Activated naive CD4-positive, alpha-beta T cell treated with anti-CD3 and anti-CD28 coated beads for 36 hours (primary cell): ENCODE measurements at regions of chr17 and their contacts with region 1.

Region 1: GRCh38 chr17:64320613-64321553 is 57.8 kb upstream of the TEX2 start:
- DNase-seq: peak; percentile 76
- H3K4me3 Mint-ChIP-seq: no peak overlapping the region
- H3K27ac Mint-ChIP-seq: no peak overlapping the region
- H3K4me1 Mint-ChIP-seq: peaks cover 11% of the 10 kb centered on the region
- H3K27me3 Mint-ChIP-seq: no peaks in the 10 kb centered on the region

Region 2: DNA sequence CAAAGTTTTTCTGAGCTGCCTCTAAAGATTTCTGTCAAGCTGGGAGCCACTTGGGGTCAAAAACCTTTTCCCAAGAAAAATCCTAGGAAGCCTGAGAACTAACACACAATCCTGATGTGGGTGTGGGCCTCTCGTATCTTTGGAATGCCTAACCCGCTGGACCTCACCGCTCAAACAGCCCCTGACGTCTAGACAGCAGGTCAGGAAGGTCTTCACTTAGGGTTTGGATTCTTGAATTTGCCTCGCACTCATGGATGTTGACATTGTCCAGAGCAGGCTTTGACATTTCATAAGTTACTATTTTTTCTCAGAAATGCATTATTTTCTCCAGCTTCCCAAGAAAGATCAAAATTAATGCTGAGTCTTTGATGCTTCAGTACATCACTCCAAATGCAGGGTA is 76.7 kb before region 1 on chr17:
- CTCF ChIA-PET with region 1: no interaction called
- intact Hi-C with region 1: no loop called
- DNase-seq: no peak
- H3K4me3 Mint-ChIP-seq: no peak overlapping the region
- H3K27ac Mint-ChIP-seq: no peak overlapping the region
- H3K4me1 Mint-ChIP-seq: peaks cover 18% of the 10 kb centered on the region
- H3K27me3 Mint-ChIP-seq: no peaks in the 10 kb centered on the region

Region 3: GRCh38 chr17:64270885-64271284 is 50.0 kb before region 1 on chr17:
- CTCF ChIA-PET with region 1: no interaction called
- intact Hi-C with region 1: no loop called
- DNase-seq: peak; percentile 33
- H3K4me3 Mint-ChIP-seq: peak overlapping the region; percentile 5
- H3K27ac Mint-ChIP-seq: peak overlapping the region; percentile 7
- H3K4me1 Mint-ChIP-seq: peaks cover 30% of the 10 kb centered on the region
- H3K27me3 Mint-ChIP-seq: peaks cover 2% of the 10 kb centered on the region

Region 4: GRCh38 chr17:64306850-64307463 is 13.9 kb before region 1 on chr17:
- CTCF ChIA-PET with region 1: interaction called, 18 read pairs
- intact Hi-C with region 1: no loop called
- DNase-seq: peak; percentile 80
- H3K4me3 Mint-ChIP-seq: no peak overlapping the region
- H3K27ac Mint-ChIP-seq: no peak overlapping the region
- H3K4me1 Mint-ChIP-seq: peaks cover 2% of the 10 kb centered on the region
- H3K27me3 Mint-ChIP-seq: no peaks in the 10 kb centered on the region

Region 5: GRCh38 chr17:64411999-64412771 is 91.3 kb after region 1 on chr17:
- CTCF ChIA-PET with region 1: interaction called, 26 read pairs
- intact Hi-C with region 1: no loop called
- DNase-seq: no peak
- H3K4me3 Mint-ChIP-seq: peak overlapping the region; percentile 49
- H3K27ac Mint-ChIP-seq: no peak overlapping the region
- H3K4me1 Mint-ChIP-seq: peaks cover 18% of the 10 kb centered on the region
- H3K27me3 Mint-ChIP-seq: no peaks in the 10 kb centered on the region

Region 6: DNA sequence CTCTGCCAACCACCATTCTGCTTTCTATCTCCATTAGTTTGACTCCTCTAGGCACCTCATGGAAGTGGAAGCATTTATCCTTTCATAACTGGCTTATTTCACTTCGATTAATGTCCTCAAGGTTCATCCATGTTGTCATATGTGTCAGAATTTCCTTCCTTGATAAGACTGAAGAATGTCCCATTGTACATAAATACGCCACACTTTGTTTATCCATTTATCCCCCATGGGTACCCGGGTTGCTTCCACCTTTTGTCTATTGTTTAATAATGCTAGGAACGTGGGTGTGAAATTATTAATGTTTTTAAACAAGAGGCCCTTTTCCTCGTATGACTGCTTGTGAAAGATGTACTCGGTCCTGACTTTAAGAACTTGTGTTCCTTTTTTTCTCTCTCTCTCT is 140.9 kb after region 1 on chr17:
- CTCF ChIA-PET with region 1: no interaction called
- intact Hi-C with region 1: no loop called
- DNase-seq: no peak
- H3K4me3 Mint-ChIP-seq: no peak overlapping the region
- H3K27ac Mint-ChIP-seq: no peak overlapping the region
- H3K4me1 Mint-ChIP-seq: peaks cover 4% of the 10 kb centered on the region
- H3K27me3 Mint-ChIP-seq: no peaks in the 10 kb centered on the region

Region 7: DNA sequence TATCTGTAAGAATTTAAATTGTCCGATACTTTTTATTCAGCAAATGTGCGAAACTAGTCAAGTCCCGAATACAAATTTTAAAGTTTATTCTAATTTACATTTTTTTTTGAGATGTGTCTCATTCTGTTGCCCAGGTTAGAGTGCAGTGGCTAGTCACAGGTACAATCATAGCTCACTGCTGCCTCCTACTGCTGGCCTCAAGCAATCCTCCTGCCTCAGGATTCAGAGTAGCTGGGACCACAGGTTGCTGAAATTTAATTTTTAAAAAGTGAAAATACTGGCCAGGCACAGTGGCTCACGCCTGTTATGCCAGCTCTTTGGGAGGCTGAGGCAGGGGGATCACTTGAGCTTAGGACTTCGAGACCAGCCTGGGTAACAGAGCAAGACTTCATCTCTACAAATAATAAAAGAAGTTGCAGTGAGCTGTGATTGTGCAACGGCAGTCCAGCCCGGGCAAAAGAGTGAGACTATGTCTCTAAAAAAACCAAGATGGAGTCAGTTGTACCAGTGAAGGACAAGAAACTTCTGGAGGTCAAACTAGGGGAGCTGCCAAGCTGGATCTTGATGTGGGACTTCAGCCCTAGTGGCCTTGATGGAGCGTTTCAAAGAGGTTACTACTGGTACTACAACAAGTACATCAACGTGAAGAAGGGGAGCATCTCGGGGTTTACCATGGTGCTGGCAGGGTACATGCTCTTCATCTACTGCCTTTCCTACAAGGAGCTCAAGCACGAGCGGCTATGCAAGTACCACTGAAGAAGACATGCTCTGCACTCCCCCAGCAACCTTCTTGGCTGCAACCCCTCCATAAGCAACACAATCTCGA is 170.4 kb after region 1 on chr17:
- CTCF ChIA-PET with region 1: interaction called, 3 read pairs
- intact Hi-C with region 1: loop called (anchors 2 kb)
- DNase-seq: peak; percentile 75
- H3K4me3 Mint-ChIP-seq: no peak overlapping the region
- H3K27ac Mint-ChIP-seq: no peak overlapping the region
- H3K4me1 Mint-ChIP-seq: peaks cover 31% of the 10 kb centered on the region
- H3K27me3 Mint-ChIP-seq: no peaks in the 10 kb centered on the region

Region 8: DNA sequence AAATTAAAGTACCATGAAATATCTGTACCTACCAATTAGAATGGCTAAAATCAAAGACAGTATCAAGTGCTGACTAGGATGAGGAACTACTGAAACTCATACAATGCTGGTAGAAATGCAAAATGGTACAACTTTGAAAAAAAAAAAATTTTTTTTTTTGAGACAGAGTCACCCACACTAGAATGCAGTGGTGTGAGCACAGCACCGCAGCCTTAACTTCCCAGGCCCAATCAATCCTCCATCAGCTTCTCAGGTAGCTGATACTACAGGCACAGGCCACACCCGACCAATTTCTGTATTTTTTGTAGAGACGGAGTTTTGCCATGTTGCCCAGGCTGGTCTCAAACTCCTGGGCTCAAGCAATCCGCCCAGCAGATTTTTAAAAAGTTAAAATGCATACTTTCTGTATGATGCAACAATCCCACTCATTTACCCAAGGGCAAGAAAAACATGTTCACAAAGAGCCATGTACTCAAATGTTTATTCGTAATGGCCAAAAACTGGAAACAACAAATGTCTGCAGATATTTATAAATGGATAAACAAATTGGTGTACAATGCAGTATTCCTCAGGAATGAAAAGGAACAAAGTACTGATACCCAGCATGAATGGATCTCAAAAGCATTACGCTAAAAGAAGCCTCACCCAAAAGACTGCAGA is 332.6 kb after region 1 on chr17:
- CTCF ChIA-PET with region 1: no interaction called
- intact Hi-C with region 1: loop called (anchors 1 kb)
- DNase-seq: no peak
- H3K4me3 Mint-ChIP-seq: no peak overlapping the region
- H3K27ac Mint-ChIP-seq: peak overlapping the region; percentile 50
- H3K4me1 Mint-ChIP-seq: peaks cover 45% of the 10 kb centered on the region
- H3K27me3 Mint-ChIP-seq: no peaks in the 10 kb centered on the region

Region 9: DNA sequence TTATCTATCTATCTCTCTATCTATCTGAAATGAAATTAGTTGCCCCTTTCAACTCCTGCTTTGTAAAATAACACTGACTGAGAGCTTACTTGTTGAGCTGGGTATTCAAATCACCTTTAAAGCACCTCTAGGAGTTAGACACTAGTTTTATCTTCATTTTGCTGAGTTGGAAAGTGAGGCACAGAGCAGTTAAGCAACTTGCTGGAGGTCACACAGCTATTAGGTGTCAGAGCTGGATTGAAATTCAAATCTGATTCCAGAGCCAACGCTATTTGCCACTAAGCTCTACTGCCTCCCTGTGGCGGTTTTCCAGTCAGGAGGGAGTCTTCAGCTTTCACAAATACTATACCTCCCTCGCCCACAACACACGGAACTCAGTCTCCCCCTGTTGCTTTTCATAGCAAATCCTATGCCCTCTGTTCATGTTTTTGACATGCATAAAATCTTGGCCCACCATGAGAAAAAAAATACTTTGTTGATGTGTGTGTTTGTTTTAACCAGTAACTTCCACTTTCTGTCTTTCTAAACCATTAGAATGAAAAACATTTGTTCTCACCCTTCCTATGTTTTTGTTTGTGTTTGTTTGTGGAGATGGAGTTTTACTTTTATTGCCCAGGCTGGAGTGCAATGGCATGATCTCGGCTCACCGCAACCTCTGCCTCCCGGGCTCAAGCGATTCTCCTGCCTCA is 416.1 kb after region 1 on chr17:
- CTCF ChIA-PET with region 1: interaction called, 3 read pairs
- intact Hi-C with region 1: loop called (anchors 10 kb)
- DNase-seq: peak; percentile 80
- H3K4me3 Mint-ChIP-seq: no peak overlapping the region
- H3K27ac Mint-ChIP-seq: no peak overlapping the region
- H3K4me1 Mint-ChIP-seq: peaks cover 13% of the 10 kb centered on the region
- H3K27me3 Mint-ChIP-seq: no peaks in the 10 kb centered on the region